Panc1 (cell line): ENCODE measurements at regions of chr12 and their contacts with region 1.

Region 1: GRCh38 chr12:15276088-15276698 is 46.1 kb upstream of the PTPRO start:
- DNase-seq: peak; percentile 22
- ATAC-seq: peak; percentile 71
- H3K4me3 ChIP-seq: no peak overlapping the region
- H3K27ac ChIP-seq: no peak overlapping the region
- H3K4me1 ChIP-seq: no peaks in the 10 kb centered on the region
- H3K27me3 ChIP-seq: no peaks in the 10 kb centered on the region
- CTCF ChIP-seq: peak; percentile 67

Region 2: GRCh38 chr12:14948672-14949071 is 327.5 kb before region 1 on chr12:
- CTCF ChIA-PET with region 1: no interaction called
- POLR2A ChIA-PET with region 1: no interaction called
- in situ Hi-C with region 1: no loop called
- intact Hi-C with region 1: no loop called
- DNase-seq: no peak
- ATAC-seq: no peak
- H3K4me3 ChIP-seq: no peak overlapping the region
- H3K27ac ChIP-seq: no peak overlapping the region
- H3K4me1 ChIP-seq: no peaks in the 10 kb centered on the region
- H3K27me3 ChIP-seq: no peaks in the 10 kb centered on the region
- CTCF ChIP-seq: no peak

Region 3: GRCh38 chr12:15404485-15404884 is 128.3 kb after region 1 on chr12:
- CTCF ChIA-PET with region 1: no interaction called
- POLR2A ChIA-PET with region 1: no interaction called
- in situ Hi-C with region 1: no loop called
- intact Hi-C with region 1: no loop called
- DNase-seq: no peak
- ATAC-seq: no peak
- H3K4me3 ChIP-seq: no peak overlapping the region
- H3K27ac ChIP-seq: no peak overlapping the region
- H3K4me1 ChIP-seq: no peaks in the 10 kb centered on the region
- H3K27me3 ChIP-seq: no peaks in the 10 kb centered on the region; the same call in 1 of the 2 replicates
- CTCF ChIP-seq: no peak

Region 4: GRCh38 chr12:15515010-15515409 is 238.8 kb after region 1 on chr12:
- CTCF ChIA-PET with region 1: interaction called, 11 read pairs
- POLR2A ChIA-PET with region 1: no interaction called
- in situ Hi-C with region 1: no loop called
- intact Hi-C with region 1: no loop called
- DNase-seq: no peak
- ATAC-seq: no peak
- H3K4me3 ChIP-seq: no peak overlapping the region
- H3K27ac ChIP-seq: no peak overlapping the region
- H3K4me1 ChIP-seq: no peaks in the 10 kb centered on the region
- H3K27me3 ChIP-seq: no peaks in the 10 kb centered on the region
- CTCF ChIP-seq: no peak

Region 5: GRCh38 chr12:15522565-15523187 is 246.5 kb after region 1 on chr12:
- CTCF ChIA-PET with region 1: interaction called, 8 read pairs
- POLR2A ChIA-PET with region 1: no interaction called
- in situ Hi-C with region 1: no loop called
- intact Hi-C with region 1: loop called (anchors 2 kb)
- DNase-seq: no peak
- ATAC-seq: no peak
- H3K4me3 ChIP-seq: no peak overlapping the region
- H3K27ac ChIP-seq: no peak overlapping the region
- H3K4me1 ChIP-seq: no peaks in the 10 kb centered on the region
- H3K27me3 ChIP-seq: no peaks in the 10 kb centered on the region
- CTCF ChIP-seq: peak; percentile 50; the same call in 1 of the 2 replicates